ENCODE measurements at regions of chr6 and their contacts with region 1.

Region 1: GRCh38 chr6:42532038-42532669 is 31.7 kb upstream of the UBR2 start:
- DNase-seq: peak; percentile 68 to 80 (median 78)
- ATAC-seq: peak; percentile 94
- H3K4me3 ChIP-seq: no peak overlapping the region
- H3K27ac ChIP-seq: no peak overlapping the region
- H3K4me1 ChIP-seq: no peaks in the 10 kb centered on the region; a peak in 1 of 5 replicates
- H3K27me3 ChIP-seq: peaks cover 13 to 14% of the 10 kb centered on the region in 2 experiments
- CTCF ChIP-seq: peak; percentile 90 to 98 (median 93)
- EP300 ChIP-seq: no peak
- POLR2A ChIP-seq: no peak
- RAD21 ChIP-seq: peak; percentile 78 to 82

Region 2: DNA sequence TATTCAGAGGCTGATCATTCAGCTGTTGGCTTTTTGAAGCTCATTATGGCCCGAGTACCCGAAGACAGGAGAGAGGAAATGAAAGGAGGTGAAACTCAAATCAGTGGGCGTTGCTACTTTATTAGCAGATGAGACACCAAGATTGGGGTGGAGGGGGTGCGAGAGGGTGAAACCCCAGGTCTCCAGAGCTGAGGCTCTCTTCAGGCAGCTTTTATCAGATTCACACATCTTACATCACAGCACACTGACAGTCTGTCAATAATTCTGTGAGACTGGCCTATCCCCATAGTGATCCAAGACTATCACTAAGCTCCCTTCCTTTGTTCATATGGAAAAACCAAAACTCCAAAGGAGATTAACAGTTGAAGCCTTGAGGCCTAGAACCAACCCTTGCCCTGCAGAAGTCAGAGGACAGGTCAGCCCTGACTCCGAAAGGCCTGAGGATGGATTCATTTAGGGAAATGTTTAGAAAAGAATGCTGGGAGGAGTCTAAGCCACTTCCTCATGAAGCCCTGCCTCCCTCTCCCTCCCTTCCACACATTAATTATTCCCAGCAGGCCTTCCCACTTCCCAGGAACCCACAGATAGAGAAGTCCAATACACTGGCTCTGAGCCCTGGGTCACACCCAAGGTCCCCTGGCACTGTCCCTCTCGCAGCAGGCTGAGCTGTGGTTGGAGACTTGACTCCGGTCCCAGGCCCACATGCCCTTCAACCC is 103.7 kb before region 1 on chr6:
- CTCF ChIA-PET with region 1: no interaction called
- POLR2A ChIA-PET with region 1: no interaction called
- in situ Hi-C with region 1: no loop called
- intact Hi-C with region 1: no loop called
- DNase-seq: no peak
- ATAC-seq: no peak
- H3K4me3 ChIP-seq: no peak overlapping the region
- H3K27ac ChIP-seq: no peak overlapping the region
- H3K4me1 ChIP-seq: no peaks in the 10 kb centered on the region
- H3K27me3 ChIP-seq: peaks cover 7 to 19% of the 10 kb centered on the region in 2 experiments; a peak in 3 of 5 replicates
- CTCF ChIP-seq: no peak
- EP300 ChIP-seq: no peak
- POLR2A ChIP-seq: no peak
- RAD21 ChIP-seq: no peak

Region 3: GRCh38 chr6:42460883-42461282 is 71.3 kb before region 1 on chr6:
- CTCF ChIA-PET with region 1: no interaction called
- POLR2A ChIA-PET with region 1: no interaction called
- in situ Hi-C with region 1: no loop called
- intact Hi-C with region 1: loop called (anchors 5 kb)
- DNase-seq: no peak
- ATAC-seq: no peak
- H3K4me3 ChIP-seq: no peak overlapping the region
- H3K27ac ChIP-seq: no peak overlapping the region
- H3K4me1 ChIP-seq: no peaks in the 10 kb centered on the region
- H3K27me3 ChIP-seq: peaks cover 9 to 14% of the 10 kb centered on the region in 2 experiments
- CTCF ChIP-seq: no peak
- EP300 ChIP-seq: no peak
- POLR2A ChIP-seq: no peak
- RAD21 ChIP-seq: no peak

Region 4: DNA sequence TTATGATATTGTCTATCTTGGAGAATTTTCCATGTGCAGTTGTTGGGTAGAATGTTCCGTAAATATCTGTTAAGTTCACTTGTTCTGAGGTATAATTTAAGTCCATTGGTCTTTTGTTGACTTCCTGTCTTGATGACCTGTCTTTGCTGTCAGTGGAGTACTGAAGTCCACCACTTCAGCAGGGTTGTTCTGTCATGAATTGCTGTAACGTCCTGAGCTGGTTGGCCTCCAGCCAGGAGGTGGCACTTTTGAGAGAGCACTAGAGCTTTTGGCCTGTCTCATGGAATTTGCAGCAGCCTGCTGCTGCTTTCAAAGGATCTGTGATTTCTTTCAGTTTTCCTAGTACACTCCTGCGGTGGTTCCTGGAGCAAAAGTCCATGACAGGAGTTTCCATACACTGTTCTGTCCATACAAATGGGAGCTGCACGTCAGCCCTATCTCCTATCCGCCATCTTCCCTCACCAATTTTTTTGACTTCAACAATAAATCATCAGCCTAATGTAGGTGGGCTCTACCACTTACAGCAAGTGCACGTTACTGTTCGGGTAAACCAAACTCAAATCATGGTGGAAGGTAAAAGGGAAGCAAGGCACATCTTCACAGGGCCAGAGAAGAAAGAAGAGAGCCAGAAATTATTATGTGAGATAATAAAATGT is 33.6 kb before region 1 on chr6:
- CTCF ChIA-PET with region 1: no interaction called
- POLR2A ChIA-PET with region 1: no interaction called
- in situ Hi-C with region 1: no loop called
- intact Hi-C with region 1: loop called (anchors 5 kb)
- DNase-seq: peak in 1 of 4 experiments; percentile 57
- ATAC-seq: peak; percentile 58; the same call in 2 of the 3 replicates
- H3K4me3 ChIP-seq: no peak overlapping the region
- H3K27ac ChIP-seq: no peak overlapping the region
- H3K4me1 ChIP-seq: no peaks in the 10 kb centered on the region
- H3K27me3 ChIP-seq: no peaks in the 10 kb centered on the region
- CTCF ChIP-seq: peak in 1 of 3 experiments; percentile 38; a peak in 1 of 6 replicates
- EP300 ChIP-seq: no peak
- POLR2A ChIP-seq: no peak
- RAD21 ChIP-seq: peak in 1 of 2 experiments; percentile 27; a peak in 1 of 4 replicates

Region 5: DNA sequence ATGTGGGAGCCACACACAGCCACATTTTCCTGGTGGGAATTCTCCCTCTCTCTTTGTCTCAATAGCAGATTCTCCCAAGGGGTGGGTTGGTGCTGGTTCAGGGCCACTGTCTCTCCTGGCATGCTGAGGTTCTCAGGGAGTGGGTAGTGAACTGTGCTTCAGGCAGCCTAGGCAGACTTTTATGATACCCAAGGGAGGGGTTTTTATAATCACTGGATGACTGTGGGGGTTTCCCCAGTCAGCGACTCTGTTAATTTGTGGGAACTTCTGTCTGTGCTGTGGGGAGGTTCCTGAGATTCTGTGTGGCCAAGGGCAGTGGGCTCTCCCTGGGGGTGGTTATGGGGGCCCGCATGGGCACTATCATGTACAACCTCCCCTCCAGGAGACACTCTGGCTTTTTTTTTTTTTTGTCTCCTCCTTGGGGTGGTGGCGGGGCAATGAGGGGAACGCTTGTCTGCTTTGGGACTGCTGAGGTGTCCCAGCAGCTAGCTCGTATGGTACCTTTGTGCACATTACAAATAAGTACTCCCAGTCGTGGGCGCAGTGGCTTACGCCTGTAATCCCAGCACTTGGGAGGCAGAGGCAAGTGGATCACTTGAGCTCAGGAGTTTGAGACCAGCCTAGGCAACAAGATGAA is 554.0 kb after region 1 on chr6:
- CTCF ChIA-PET with region 1: no interaction called
- POLR2A ChIA-PET with region 1: no interaction called
- in situ Hi-C with region 1: no loop called
- intact Hi-C with region 1: no loop called
- DNase-seq: no peak
- ATAC-seq: no peak
- H3K4me3 ChIP-seq: no peak overlapping the region
- H3K27ac ChIP-seq: no peak overlapping the region
- H3K4me1 ChIP-seq: peaks cover 0 to 2% of the 10 kb centered on the region in 2 experiments; a peak in 1 of 5 replicates
- H3K27me3 ChIP-seq: peaks cover 8% of the 10 kb centered on the region in 2 experiments; a peak in 3 of 5 replicates
- CTCF ChIP-seq: no peak
- EP300 ChIP-seq: no peak
- POLR2A ChIP-seq: no peak
- RAD21 ChIP-seq: no peak

Region 6: GRCh38 chr6:43334466-43335095 is 802.4 kb after region 1 on chr6:
- CTCF ChIA-PET with region 1: no interaction called
- POLR2A ChIA-PET with region 1: no interaction called
- in situ Hi-C with region 1: no loop called
- intact Hi-C with region 1: no loop called
- DNase-seq: peak; percentile 56 to 74 (median 68)
- ATAC-seq: peak; percentile 96
- H3K4me3 ChIP-seq: no peak overlapping the region
- H3K27ac ChIP-seq: no peak overlapping the region
- H3K4me1 ChIP-seq: peaks cover 0 to 2% of the 10 kb centered on the region in 2 experiments; a peak in 1 of 5 replicates
- H3K27me3 ChIP-seq: no peaks in the 10 kb centered on the region
- CTCF ChIP-seq: peak; percentile 70 to 84 (median 82)
- EP300 ChIP-seq: no peak
- POLR2A ChIP-seq: no peak
- RAD21 ChIP-seq: peak; percentile 68 to 82

Measured in K562 (cell line).